ENCODE measurements at regions of chr14 and their contacts with region 1.

Region 1: DNA sequence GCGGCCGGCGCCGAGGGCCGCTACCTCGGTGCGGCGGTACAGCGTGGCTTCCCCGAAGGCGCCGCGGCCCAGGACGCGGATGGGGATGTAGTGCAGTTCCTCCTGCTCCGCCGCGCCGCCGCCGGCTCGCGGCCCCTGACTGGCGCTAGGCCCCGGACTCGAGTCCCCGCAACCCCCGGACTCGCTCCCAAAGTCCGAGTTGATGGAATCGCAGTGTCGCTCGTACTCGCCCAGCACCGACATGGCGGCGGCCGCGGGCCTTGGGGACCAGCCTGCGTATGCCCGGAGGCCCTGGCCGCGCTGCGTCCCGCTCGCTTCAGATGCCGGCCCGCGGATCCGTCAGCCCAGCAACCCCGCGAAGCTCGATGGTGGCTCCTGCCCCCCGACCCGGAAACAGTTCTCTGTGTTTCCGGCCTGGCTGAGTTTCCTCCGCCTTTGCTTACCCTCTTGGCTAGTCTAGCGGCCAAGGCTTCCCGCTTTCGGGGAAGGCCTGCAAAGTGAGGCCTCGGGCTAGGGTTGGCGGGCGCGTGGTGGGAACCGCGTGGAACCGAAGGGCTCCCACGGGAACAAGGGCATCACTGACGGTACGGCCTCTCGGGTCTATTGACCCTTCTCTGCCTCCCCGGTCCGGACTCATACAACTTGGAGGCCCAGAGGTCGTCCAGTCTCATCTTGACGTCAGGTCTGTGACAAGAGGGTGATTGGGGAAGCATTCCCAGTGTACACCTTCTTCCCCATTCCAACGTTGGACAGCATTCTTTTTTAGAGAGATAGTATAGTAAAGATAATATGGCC is at the start of gene NEK9:
- DNase-seq: peak; percentile 84
- H3K4me3 ChIP-seq: peak within 1 kb of the TSS; percentile 69 to 80 (median 75)
- H3K27ac ChIP-seq: peak within 1 kb of the TSS; percentile 85
- H3K4me1 ChIP-seq: peaks cover 37% of the 10 kb centered on the region
- H3K27me3 ChIP-seq: no peaks in the 10 kb centered on the region
- CTCF ChIP-seq: no peak
- total RNA-seq, gene NEK9: 31.7 to 58.0 TPM

Region 2: GRCh38 chr14:75452900-75453747 is 326.2 kb after region 1 on chr14:
- CTCF ChIA-PET with region 1: no interaction called
- dilution Hi-C with region 1: loop called (anchors 25 kb)
- in situ Hi-C with region 1: no loop called
- intact Hi-C with region 1: no loop called
- DNase-seq: peak; percentile 83
- H3K4me3 ChIP-seq: no peak overlapping the region
- H3K27ac ChIP-seq: peak overlapping the region; percentile 31
- H3K4me1 ChIP-seq: peaks cover 27% of the 10 kb centered on the region
- H3K27me3 ChIP-seq: no peaks in the 10 kb centered on the region
- CTCF ChIP-seq: peak in 1 of 2 donors; percentile 13

Region 3: GRCh38 chr14:75497191-75497590 is 370.3 kb after region 1 on chr14:
- CTCF ChIA-PET with region 1: no interaction called
- dilution Hi-C with region 1: no loop called
- in situ Hi-C with region 1: loop called in 1 of 2 experiments (anchors 10 kb)
- intact Hi-C with region 1: no loop called
- DNase-seq: no peak
- H3K4me3 ChIP-seq: no peak overlapping the region
- H3K27ac ChIP-seq: no peak overlapping the region
- H3K4me1 ChIP-seq: no peaks in the 10 kb centered on the region
- H3K27me3 ChIP-seq: no peaks in the 10 kb centered on the region
- CTCF ChIP-seq: no peak

Region 4: GRCh38 chr14:75560962-75561432 is 434.1 kb after region 1 on chr14:
- CTCF ChIA-PET with region 1: interaction called, 4 read pairs
- dilution Hi-C with region 1: loop called (anchors 5 kb)
- in situ Hi-C with region 1: loop called in 1 of 2 experiments (anchors 10 kb)
- intact Hi-C with region 1: loop called (anchors 5 kb)
- DNase-seq: peak; percentile 86
- H3K4me3 ChIP-seq: no peak overlapping the region
- H3K27ac ChIP-seq: no peak overlapping the region
- H3K4me1 ChIP-seq: peaks cover 16% of the 10 kb centered on the region
- H3K27me3 ChIP-seq: no peaks in the 10 kb centered on the region
- CTCF ChIP-seq: peak; percentile 91 to 97

Region 5: DNA sequence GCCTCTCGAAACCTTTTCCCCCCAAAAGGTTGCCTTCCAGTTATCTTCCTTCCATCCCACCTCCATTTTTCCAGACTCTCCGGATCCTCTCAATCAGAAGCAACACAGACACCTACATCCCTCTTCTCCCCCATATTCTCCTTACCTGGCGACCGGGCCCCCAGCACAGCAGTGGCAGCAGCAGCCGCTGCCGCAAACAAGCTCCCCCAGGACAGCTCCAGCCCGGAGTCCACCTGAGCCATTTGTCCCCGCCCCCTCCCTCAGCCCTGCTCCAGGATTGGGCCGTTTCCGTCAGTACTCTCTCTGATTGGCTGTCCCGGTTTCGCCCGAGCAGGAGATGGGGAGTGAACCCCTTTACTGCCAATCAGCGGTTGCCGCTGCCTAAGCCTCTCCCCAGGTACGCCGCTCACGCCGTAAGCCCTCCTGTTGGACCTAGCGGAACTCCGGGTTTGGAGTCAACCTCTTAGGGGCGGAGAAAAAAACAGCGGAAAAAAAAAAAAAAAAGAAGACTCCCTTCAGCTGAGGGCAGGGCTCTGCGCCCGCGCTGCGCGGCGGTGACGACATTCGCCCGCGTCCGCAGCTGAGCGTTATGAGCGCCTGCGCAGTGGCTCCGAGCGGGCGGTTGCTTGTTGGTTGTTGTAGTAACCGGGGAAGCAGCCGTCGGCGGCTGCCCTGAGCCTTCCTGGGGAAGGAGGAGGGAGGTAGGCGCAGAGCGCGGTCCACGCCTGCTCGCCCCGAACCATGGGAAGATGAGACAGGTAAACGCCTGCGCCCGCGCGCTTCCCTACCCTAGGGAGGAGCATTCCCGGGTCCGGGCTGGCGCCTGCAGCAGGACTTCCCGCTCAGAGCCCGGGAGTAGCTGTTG is 534.0 kb after region 1 on chr14 and contains the starts of genes ERG28 and TTLL5:
- CTCF ChIA-PET with region 1: no interaction called
- dilution Hi-C with region 1: no loop called
- in situ Hi-C with region 1: loop called in 1 of 2 experiments (anchors 25 kb)
- intact Hi-C with region 1: no loop called
- DNase-seq: peak; percentile 100
- H3K4me3 ChIP-seq: peak within 1 kb of the TSS; percentile 73 to 97 (median 95)
- H3K27ac ChIP-seq: peak within 1 kb of the TSS; percentile 94
- H3K4me1 ChIP-seq: peaks cover 19% of the 10 kb centered on the region
- H3K27me3 ChIP-seq: no peaks in the 10 kb centered on the region
- CTCF ChIP-seq: no peak
- total RNA-seq, gene ERG28: 9.5 to 26.9 TPM
- total RNA-seq, gene TTLL5: 22.2 to 37.0 TPM

Measured in mammary epithelial cell (primary cell).